B cell (primary cell): ENCODE measurements at regions of chr1 and their contacts with region 1.

Region 1: GRCh38 chr1:70790237-70790923 is 257.2 kb downstream of the PTGER3 start:
- DNase-seq: no peak
- ATAC-seq: no peak
- H3K4me3 ChIP-seq: no peak overlapping the region
- H3K4me3 Mint-ChIP-seq: no peak overlapping the region
- H3K27ac ChIP-seq: no peak overlapping the region
- H3K27ac Mint-ChIP-seq: no peak overlapping the region
- H3K4me1 ChIP-seq: no peaks in the 10 kb centered on the region
- H3K4me1 Mint-ChIP-seq: no peaks in the 10 kb centered on the region
- H3K27me3 ChIP-seq: no peaks in the 10 kb centered on the region
- H3K27me3 Mint-ChIP-seq: no peaks in the 10 kb centered on the region
- CTCF ChIP-seq: no peak

Region 2: GRCh38 chr1:72230746-72231145 is 1440.4 kb after region 1 on chr1:
- CTCF ChIA-PET with region 1: no interaction called
- POLR2A ChIA-PET with region 1: interaction called, 12 read pairs
- intact Hi-C with region 1: no loop called
- DNase-seq: no peak
- ATAC-seq: no peak
- H3K4me3 ChIP-seq: no peak overlapping the region
- H3K4me3 Mint-ChIP-seq: no peak overlapping the region
- H3K27ac ChIP-seq: no peak overlapping the region
- H3K27ac Mint-ChIP-seq: no peak overlapping the region
- H3K4me1 ChIP-seq: no peaks in the 10 kb centered on the region
- H3K4me1 Mint-ChIP-seq: no peaks in the 10 kb centered on the region
- H3K27me3 ChIP-seq: no peaks in the 10 kb centered on the region
- H3K27me3 Mint-ChIP-seq: no peaks in the 10 kb centered on the region
- CTCF ChIP-seq: no peak